Endothelial cell of umbilical vein (primary cell): ENCODE measurements at regions of chr12 and their contacts with region 1.

Region 1: DNA sequence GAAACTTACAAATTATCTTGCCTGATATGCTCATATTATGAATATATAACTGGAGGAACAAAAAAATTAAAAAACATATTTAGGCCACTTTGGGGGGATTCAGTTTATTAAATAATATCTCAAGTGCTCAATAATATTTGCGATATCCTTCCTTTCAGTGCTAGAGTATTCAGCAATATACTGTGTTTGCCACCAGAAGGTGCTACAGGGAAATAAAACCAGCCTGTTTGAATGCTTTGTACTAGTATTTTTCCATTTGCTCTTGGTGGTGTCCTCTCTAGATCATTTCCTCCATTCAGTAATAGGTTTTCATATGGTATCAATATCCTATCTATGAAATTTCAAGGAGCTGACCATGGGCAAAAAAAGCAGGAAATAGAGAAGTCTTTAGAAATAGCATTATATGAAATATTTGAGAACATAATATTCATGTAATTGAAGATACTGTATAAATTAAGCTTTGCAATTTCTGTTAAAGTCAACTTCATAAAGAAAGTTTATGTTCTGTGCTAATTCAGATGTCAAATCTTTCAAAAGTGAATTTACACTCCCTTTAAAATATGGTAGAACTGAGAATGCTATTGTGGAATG is 106.2 kb upstream of the NAV3 start:
- DNase-seq: peak; percentile 61
- H3K4me3 ChIP-seq: no peak overlapping the region
- H3K27ac ChIP-seq: no peak overlapping the region
- H3K4me1 ChIP-seq: no peaks in the 10 kb centered on the region
- H3K27me3 ChIP-seq: no peaks in the 10 kb centered on the region
- CTCF ChIP-seq: peak; percentile 49 to 56
- POLR2A ChIP-seq: no peak

Region 2: DNA sequence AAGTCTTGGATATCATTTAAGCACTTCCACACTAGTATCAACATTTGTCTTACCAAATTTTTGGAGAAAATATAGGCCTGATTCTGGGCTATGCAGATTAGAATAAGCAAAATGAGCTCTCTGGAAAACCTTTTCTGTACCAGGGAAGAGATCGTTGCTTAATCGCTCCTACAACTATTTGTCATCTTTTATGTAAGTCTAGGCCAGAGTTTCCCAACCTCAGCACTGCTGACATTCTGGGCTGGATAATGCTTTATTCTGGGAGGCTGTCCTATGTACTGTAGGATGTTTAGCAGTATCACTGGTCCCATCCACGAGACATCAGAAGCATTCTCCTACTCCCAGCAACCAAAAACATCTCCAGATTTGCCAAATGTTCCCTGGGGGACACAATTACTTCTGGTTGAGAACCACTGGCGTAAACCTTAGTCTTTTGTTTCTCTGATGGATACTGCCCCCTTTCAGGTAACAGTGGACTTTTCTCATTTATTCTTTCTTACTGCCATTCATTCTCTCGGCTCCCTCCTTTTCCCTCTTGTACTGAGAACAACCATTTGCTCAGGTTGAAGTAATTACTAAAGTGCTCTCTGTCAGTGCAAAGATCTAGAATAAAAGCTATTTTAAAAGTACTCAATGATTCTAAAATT is 342.2 kb before region 1 on chr12:
- CTCF ChIA-PET with region 1: no interaction called
- POLR2A ChIA-PET with region 1: no interaction called
- dilution Hi-C with region 1: no loop called
- intact Hi-C with region 1: no loop called
- DNase-seq: no peak
- H3K4me3 ChIP-seq: no peak overlapping the region
- H3K27ac ChIP-seq: no peak overlapping the region
- H3K4me1 ChIP-seq: no peaks in the 10 kb centered on the region
- H3K27me3 ChIP-seq: peaks cover 0 to 7% of the 10 kb centered on the region in 2 experiments
- CTCF ChIP-seq: no peak
- POLR2A ChIP-seq: no peak

Region 3: DNA sequence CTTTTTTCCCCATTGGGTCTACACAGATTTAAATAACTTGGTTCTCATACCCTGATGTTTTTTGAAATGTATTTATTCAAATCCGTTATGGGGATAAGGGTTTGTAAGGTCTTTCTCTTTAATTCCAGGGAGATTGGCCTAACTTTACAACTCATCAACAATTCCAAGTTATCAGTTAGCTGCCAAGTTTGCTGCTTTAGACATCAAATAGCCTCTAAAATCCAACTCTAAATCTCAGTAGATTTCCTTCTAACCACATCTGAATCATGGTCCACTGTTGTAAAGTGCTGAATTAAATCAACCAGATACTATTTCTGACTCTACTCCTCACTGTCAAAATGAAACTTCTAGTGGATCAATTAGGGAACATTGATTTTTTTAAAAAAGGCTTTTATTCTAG is 295.0 kb before region 1 on chr12:
- CTCF ChIA-PET with region 1: no interaction called
- POLR2A ChIA-PET with region 1: no interaction called
- dilution Hi-C with region 1: no loop called
- intact Hi-C with region 1: no loop called
- DNase-seq: no peak
- H3K4me3 ChIP-seq: no peak overlapping the region
- H3K27ac ChIP-seq: no peak overlapping the region
- H3K4me1 ChIP-seq: no peaks in the 10 kb centered on the region
- H3K27me3 ChIP-seq: no peaks in the 10 kb centered on the region
- CTCF ChIP-seq: no peak
- POLR2A ChIP-seq: no peak

Region 4: GRCh38 chr12:77914081-77914488 is 189.6 kb after region 1 on chr12:
- CTCF ChIA-PET with region 1: interaction called, 22 read pairs
- POLR2A ChIA-PET with region 1: no interaction called
- dilution Hi-C with region 1: no loop called
- intact Hi-C with region 1: no loop called
- DNase-seq: no peak
- H3K4me3 ChIP-seq: no peak overlapping the region
- H3K27ac ChIP-seq: no peak overlapping the region
- H3K4me1 ChIP-seq: no peaks in the 10 kb centered on the region
- H3K27me3 ChIP-seq: no peaks in the 10 kb centered on the region
- CTCF ChIP-seq: no peak
- POLR2A ChIP-seq: no peak

Region 5: GRCh38 chr12:77919450-77919849 is 195.0 kb after region 1 on chr12:
- CTCF ChIA-PET with region 1: interaction called, 305 read pairs
- POLR2A ChIA-PET with region 1: no interaction called
- dilution Hi-C with region 1: no loop called
- intact Hi-C with region 1: no loop called
- DNase-seq: no peak
- H3K4me3 ChIP-seq: no peak overlapping the region
- H3K27ac ChIP-seq: no peak overlapping the region
- H3K4me1 ChIP-seq: no peaks in the 10 kb centered on the region
- H3K27me3 ChIP-seq: no peaks in the 10 kb centered on the region
- CTCF ChIP-seq: no peak
- POLR2A ChIP-seq: no peak